Dorsolateral prefrontal cortex (tissue), 120 donors: ENCODE measurements at regions of chr4 and their contacts with region 1.

Region 1: GRCh38 chr4:146916479-146917076 is 29.1 kb downstream of the TTC29 start:
- DNase-seq: no peak
- H3K4me3 ChIP-seq: no peak overlapping the region
- H3K27ac ChIP-seq: no peak overlapping the region
- H3K27me3 ChIP-seq: peaks cover 0 to 2% (median 0%) of the 10 kb centered on the region in 45 donors
- CTCF ChIP-seq: peak in 55 of 56 donors; percentile 46 to 93 (median 76)

Region 2: GRCh38 chr4:145956288-145956890 is 960.2 kb before region 1 on chr4:
- intact Hi-C with region 1: loop called in 1 of 2 experiments (anchors 10 kb)
- DNase-seq: no peak
- H3K4me3 ChIP-seq: no peak overlapping the region
- H3K27ac ChIP-seq: no peak overlapping the region
- H3K27me3 ChIP-seq: peaks cover 0 to 4% (median 0%) of the 10 kb centered on the region in 45 donors
- CTCF ChIP-seq: peak; percentile 34 to 77 (median 64)

Region 3: DNA sequence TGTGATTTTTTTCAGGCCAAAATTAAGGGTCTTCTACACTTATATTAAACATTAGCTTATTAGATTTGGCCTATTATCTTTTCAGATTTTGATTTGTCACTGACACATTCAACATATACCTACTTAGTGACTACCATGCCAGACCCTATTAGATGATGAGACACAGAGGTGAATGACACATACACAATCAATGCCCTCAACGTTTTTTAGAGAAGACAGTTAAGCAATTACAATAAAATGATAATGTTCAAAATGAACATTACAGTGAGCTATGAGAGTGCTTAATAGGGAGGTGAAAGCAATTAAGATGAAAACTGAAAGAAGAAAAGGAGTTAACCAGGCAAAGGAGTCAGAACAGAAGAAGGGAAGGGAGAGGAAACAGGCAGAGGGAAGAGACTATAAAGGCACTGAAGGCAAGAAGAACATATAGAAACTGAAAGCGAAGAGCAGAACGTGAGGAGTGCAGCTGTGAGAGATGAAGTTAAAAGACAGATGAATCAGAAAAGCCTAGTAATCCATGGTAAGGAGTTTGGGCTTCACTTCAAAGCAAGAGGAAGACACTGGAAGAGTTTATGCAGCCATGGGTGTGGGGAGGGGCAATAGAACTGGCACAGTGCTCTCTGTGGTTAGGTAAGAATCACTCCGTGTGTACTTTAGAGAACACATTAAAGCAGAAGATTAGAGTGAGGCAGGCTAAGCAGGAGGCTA is 583.2 kb before region 1 on chr4:
- intact Hi-C with region 1: loop called in 1 of 2 experiments (anchors 10 kb)
- DNase-seq: no peak
- H3K4me3 ChIP-seq: no peak overlapping the region
- H3K27ac ChIP-seq: no peak overlapping the region
- H3K27me3 ChIP-seq: no peaks in the 10 kb centered on the region
- CTCF ChIP-seq: no peak

Region 4: DNA sequence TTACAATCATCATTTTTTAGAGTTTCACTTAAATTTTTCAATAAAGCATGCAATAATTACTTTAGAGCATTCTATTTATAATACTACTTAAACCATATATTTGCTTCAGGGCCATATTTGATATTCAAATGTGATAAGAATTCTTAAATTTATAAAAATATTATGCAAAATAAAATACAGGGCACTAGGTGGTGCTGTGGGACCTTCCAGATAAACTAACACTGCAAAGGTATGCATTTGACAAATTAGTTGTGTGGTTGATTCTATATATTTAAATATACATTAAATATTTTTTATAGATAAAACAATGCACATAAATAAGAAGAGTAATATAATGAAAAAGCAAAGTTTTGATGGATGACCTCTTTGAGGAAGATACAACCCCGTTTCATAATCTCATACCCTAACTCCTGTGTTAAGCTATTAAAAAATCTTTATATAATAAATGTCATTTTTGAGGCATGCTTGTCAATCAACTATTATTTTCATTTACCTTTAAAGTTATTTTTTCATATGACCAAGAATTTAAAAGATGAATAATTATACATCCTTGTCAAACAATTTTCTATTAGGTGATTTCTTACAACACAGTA is 573.9 kb before region 1 on chr4:
- intact Hi-C with region 1: loop called (anchors 5 to 10 kb)
- DNase-seq: no peak
- H3K4me3 ChIP-seq: no peak overlapping the region
- H3K27ac ChIP-seq: no peak overlapping the region
- H3K27me3 ChIP-seq: no peaks in the 10 kb centered on the region
- CTCF ChIP-seq: peak; percentile 49 to 85 (median 67)

Region 5: DNA sequence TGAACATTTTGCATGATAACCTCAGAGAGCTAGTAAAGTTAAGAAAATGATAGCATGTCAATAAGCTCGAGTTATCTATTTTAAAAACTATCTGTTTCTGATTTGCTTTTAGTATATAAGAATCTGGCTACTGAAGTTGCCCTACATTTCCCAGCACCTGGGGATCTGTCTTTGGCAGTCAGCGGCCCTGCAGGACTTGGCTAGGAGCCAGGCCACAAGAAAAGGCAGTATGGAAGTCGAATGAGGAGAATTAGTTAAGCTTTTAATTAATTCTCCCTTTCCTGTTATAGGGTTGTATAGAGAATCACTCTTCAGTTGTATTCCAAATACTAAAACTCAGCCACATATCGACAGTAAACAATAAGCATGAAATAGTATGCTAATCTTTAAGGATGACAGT is 255.2 kb before region 1 on chr4:
- intact Hi-C with region 1: no loop called
- DNase-seq: no peak
- H3K4me3 ChIP-seq: no peak overlapping the region
- H3K27ac ChIP-seq: no peak overlapping the region
- H3K27me3 ChIP-seq: peaks cover 0 to 26% (median 5%) of the 10 kb centered on the region in 45 donors
- CTCF ChIP-seq: no peak

Region 6: GRCh38 chr4:146900295-146900694 is 16.3 kb before region 1 on chr4:
- intact Hi-C with region 1: no loop called
- DNase-seq: no peak
- H3K4me3 ChIP-seq: no peak overlapping the region
- H3K27ac ChIP-seq: no peak overlapping the region
- H3K27me3 ChIP-seq: peaks cover 0 to 5% (median 0%) of the 10 kb centered on the region in 45 donors
- CTCF ChIP-seq: no peak